CD8-positive, alpha-beta T cell (primary cell): ENCODE measurements at regions of chr12 and their contacts with region 1.

Region 1: GRCh38 chr12:57487597-57488401 is at the start of gene MARS1:
- DNase-seq: peak; percentile 78 to 98 (median 92)
- ATAC-seq: peak; percentile 94
- H3K4me3 ChIP-seq: peak within 1 kb of the TSS; percentile 66 to 85
- H3K4me3 Mint-ChIP-seq: peak within 1 kb of the TSS; percentile 93
- H3K27ac ChIP-seq: peak within 1 kb of the TSS; percentile 61 to 85
- H3K27ac Mint-ChIP-seq: peak within 1 kb of the TSS; percentile 94
- H3K4me1 ChIP-seq: peaks cover 19% of the 10 kb centered on the region
- H3K4me1 Mint-ChIP-seq: peaks cover 36% of the 10 kb centered on the region
- H3K27me3 ChIP-seq: no peaks in the 10 kb centered on the region
- H3K27me3 Mint-ChIP-seq: no peaks in the 10 kb centered on the region
- CTCF ChIP-seq: no peak
- total RNA-seq, gene MARS1: 213 to 226 TPM

Region 2: GRCh38 chr12:57299514-57300016 is 188.2 kb before region 1 on chr12:
- CTCF ChIA-PET with region 1: no interaction called
- POLR2A ChIA-PET with region 1: no interaction called
- intact Hi-C with region 1: no loop called
- DNase-seq: no peak
- ATAC-seq: no peak
- H3K4me3 ChIP-seq: no peak overlapping the region
- H3K4me3 Mint-ChIP-seq: no peak overlapping the region
- H3K27ac ChIP-seq: no peak overlapping the region
- H3K27ac Mint-ChIP-seq: no peak overlapping the region
- H3K4me1 ChIP-seq: no peaks in the 10 kb centered on the region
- H3K4me1 Mint-ChIP-seq: no peaks in the 10 kb centered on the region
- H3K27me3 ChIP-seq: no peaks in the 10 kb centered on the region
- H3K27me3 Mint-ChIP-seq: no peaks in the 10 kb centered on the region
- CTCF ChIP-seq: no peak

Region 3: DNA sequence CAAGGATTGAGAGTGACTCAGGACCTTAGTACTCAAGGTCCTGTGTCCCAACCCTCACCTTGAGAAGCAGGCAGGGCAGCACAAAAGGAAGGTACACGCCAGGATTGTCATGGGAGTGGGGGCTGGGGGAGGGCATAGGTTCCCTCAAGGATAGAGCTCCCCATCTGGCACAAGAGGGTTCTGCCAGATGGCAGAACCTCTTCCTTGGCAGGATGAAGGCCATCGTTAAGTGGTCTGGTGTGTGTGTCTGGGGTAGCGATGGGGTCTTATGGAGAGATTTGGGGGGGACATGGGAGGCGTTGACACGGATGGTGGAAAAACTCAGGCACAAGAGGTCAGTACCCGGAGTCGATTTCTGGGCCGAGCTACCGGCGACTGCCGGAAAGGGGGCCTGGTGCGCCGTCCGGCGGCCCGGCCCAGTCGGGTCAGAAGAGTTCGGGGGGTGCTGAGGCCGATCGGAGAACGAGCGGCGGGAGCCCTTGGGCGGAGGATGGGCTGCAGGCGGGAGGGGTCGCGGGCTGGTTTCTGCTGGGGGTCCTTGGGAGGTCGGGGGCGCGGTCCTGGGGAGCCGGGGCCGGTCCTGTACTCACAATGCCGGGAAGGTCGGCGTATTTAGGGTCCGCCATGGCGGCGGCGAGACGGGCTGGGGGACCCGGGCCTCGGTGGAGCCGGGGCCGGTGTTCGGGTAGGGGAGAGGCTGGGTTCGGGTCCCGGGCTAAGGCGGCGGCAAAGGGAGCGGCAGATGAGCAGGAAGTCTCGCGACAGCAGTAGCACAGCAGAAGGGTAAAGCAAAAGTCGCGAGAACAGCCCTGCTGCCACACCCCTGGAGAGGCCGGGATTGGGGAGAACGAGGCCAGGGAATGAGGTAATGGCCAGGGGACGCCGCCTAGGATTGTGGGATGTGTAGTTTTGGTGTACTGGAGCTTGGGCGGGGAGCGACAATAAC is 58.9 kb after region 1 on chr12 and contains the start of gene DCTN2:
- CTCF ChIA-PET with region 1: no interaction called
- POLR2A ChIA-PET with region 1: no interaction called
- intact Hi-C with region 1: loop called (anchors 2 kb)
- DNase-seq: peak; percentile 79 to 97 (median 89)
- ATAC-seq: peak; percentile 94
- H3K4me3 ChIP-seq: peak within 1 kb of the TSS; percentile 63 to 94
- H3K4me3 Mint-ChIP-seq: peak within 1 kb of the TSS; percentile 92
- H3K27ac ChIP-seq: peak within 1 kb of the TSS; percentile 63 to 87
- H3K27ac Mint-ChIP-seq: peak within 1 kb of the TSS; percentile 91
- H3K4me1 ChIP-seq: peaks cover 27% of the 10 kb centered on the region
- H3K4me1 Mint-ChIP-seq: peaks cover 57% of the 10 kb centered on the region
- H3K27me3 ChIP-seq: no peaks in the 10 kb centered on the region
- H3K27me3 Mint-ChIP-seq: no peaks in the 10 kb centered on the region
- CTCF ChIP-seq: no peak
- total RNA-seq, gene DCTN2: 39.2 to 43.3 TPM